ENCODE measurements at regions of chr4 and their contacts with region 1.

Region 1: DNA sequence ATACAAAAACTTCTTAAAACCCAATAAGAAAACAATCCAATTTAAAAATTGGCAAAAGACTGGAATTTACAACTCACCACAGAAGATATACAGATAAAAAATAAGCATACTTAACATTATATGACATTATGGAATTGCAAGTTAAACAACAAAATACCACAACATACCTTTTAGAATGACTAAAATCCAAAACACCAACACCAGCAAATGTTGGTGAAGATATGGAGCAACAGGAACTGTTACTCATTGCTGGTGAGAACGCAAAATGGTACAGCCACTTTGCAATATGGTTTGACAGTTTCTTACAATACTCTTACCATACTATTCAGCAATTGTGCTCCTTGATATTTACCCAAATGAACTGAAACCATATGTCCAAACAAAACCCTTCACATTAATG is 112.4 kb downstream of the ADGRL3 start:
- DNase-seq: no peak
- ATAC-seq: no peak
- H3K4me3 ChIP-seq: no peak overlapping the region
- H3K27ac ChIP-seq: no peak overlapping the region
- H3K4me1 ChIP-seq: no peaks in the 10 kb centered on the region
- H3K27me3 ChIP-seq: no peaks in the 10 kb centered on the region
- CTCF ChIP-seq: no peak
- EP300 ChIP-seq: no peak
- POLR2A ChIP-seq: no peak
- RAD21 ChIP-seq: no peak

Region 2: GRCh38 chr4:61277785-61278760 is 34.5 kb before region 1 on chr4:
- CTCF ChIA-PET with region 1: no interaction called
- POLR2A ChIA-PET with region 1: no interaction called
- in situ Hi-C with region 1: no loop called
- intact Hi-C with region 1: loop called (anchors 1 kb)
- DNase-seq: no peak
- ATAC-seq: no peak
- H3K4me3 ChIP-seq: no peak overlapping the region
- H3K27ac ChIP-seq: no peak overlapping the region
- H3K4me1 ChIP-seq: no peaks in the 10 kb centered on the region
- H3K27me3 ChIP-seq: no peaks in the 10 kb centered on the region
- CTCF ChIP-seq: no peak
- EP300 ChIP-seq: no peak
- POLR2A ChIP-seq: no peak
- RAD21 ChIP-seq: no peak